ENCODE measurements at regions of chr7 and their contacts with region 1.

Region 1: GRCh38 chr7:22559829-22560489 is 60.0 kb upstream of the STEAP1B start:
- DNase-seq: peak in 4 of 5 donors; percentile 72 to 92 (median 80)
- H3K4me3 ChIP-seq: no peak overlapping the region
- H3K27ac ChIP-seq: no peak overlapping the region
- H3K4me1 ChIP-seq: peaks cover 8 to 25% (median 16%) of the 10 kb centered on the region in 3 donors
- H3K27me3 ChIP-seq: no peaks in the 10 kb centered on the region
- CTCF ChIP-seq: peak; percentile 96

Region 2: DNA sequence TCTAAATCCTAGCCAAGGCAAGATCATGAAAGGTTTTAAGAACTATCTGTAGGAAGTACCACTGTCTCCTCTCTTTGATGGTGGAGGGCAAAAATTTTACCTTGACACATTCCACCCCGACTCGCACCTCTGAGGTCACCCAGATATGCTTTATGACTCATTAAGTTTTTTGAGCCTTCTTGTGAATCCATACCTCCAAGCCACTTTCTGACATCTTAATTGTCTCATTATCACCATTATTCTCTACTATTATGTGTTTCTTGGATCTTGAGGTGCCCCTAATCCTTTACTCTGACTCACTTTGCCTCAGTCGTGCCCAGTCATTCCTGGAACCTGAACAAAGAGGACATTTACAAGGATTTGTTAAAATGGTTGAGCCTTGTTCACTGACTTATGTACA is 349.6 kb before region 1 on chr7:
- intact Hi-C with region 1: no loop called
- DNase-seq: no peak
- H3K4me3 ChIP-seq: no peak overlapping the region
- H3K27ac ChIP-seq: no peak overlapping the region
- H3K4me1 ChIP-seq: peaks cover 0 to 2% (median 0%) of the 10 kb centered on the region in 3 donors
- H3K27me3 ChIP-seq: no peaks in the 10 kb centered on the region
- CTCF ChIP-seq: no peak

Region 3: GRCh38 chr7:22387583-22387982 is 172.4 kb before region 1 on chr7:
- intact Hi-C with region 1: no loop called
- DNase-seq: peak in 2 of 5 donors; percentile 13 to 40
- H3K4me3 ChIP-seq: no peak overlapping the region
- H3K27ac ChIP-seq: no peak overlapping the region
- H3K4me1 ChIP-seq: no peaks in the 10 kb centered on the region
- H3K27me3 ChIP-seq: no peaks in the 10 kb centered on the region
- CTCF ChIP-seq: no peak

Region 4: DNA sequence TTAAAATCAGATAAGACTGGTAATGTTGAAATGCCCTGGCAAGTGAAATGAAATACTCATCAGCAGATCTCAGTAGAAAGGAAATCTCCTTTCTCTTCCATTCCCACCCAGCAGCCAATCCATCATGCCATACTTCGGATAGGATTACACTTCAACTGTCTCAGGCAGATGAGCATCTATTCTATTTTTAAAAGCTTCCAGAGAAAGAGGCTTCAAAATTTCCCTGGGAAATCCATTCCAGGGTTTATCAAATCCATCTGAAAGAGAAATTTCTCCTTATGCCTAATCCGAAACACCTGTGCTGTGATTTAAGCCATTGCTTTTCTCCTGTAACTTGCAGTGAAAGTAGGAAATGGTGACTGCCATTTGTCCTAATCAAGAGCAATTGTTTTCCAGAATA is 142.6 kb before region 1 on chr7:
- intact Hi-C with region 1: no loop called
- DNase-seq: peak in 1 of 5 donors; percentile 14
- H3K4me3 ChIP-seq: no peak overlapping the region
- H3K27ac ChIP-seq: no peak overlapping the region
- H3K4me1 ChIP-seq: no peaks in the 10 kb centered on the region
- H3K27me3 ChIP-seq: no peaks in the 10 kb centered on the region
- CTCF ChIP-seq: no peak

Region 5: DNA sequence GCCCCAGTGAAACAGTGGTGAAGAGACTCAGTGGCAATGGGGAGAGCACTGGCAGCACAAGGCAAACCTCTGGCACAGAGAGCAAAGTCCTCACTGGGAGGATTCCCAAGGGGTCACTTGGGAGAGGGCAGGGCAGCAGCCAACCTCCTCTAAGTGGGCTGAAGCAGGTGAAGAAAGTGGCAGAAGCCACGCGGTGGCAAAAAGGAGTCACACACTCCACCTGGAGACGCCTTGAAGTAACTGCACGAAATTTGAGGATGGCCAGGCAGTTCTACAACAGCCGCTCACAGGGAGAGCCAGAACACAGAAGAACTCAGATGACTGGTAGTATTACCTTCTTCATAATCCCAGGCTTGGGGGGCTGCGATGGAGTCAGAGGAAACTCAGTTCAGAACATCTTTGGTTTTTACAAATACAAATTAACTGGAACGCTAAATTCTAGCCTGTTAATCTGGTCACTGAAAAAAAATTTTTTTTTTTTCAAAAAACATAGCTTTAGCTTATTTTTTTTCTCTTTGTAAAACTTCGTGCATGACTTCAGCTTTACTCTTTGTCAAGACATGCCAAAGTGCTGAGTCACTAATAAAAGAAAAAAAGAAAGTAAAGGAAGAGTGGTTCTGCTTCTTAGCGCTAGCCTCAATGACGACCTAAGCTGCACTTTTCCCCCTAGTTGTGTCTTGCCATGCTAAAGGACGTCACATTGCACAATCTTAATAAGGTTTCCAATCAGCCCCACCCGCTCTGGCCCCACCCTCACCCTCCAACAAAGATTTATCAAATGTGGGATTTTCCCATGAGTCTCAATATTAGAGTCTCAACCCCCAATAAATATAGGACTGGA is 166.6 kb after region 1 on chr7:
- intact Hi-C with region 1: loop called (anchors 10 kb)
- DNase-seq: peak; percentile 46 to 78 (median 61)
- H3K4me3 ChIP-seq: peak overlapping the region in 2 of 3 donors; percentile 36 to 50
- H3K27ac ChIP-seq: no peak overlapping the region
- H3K4me1 ChIP-seq: peaks cover 0 to 14% (median 7%) of the 10 kb centered on the region in 3 donors
- H3K27me3 ChIP-seq: no peaks in the 10 kb centered on the region
- CTCF ChIP-seq: peak; percentile 67

Region 6: GRCh38 chr7:23055582-23056178 is 495.7 kb after region 1 on chr7:
- intact Hi-C with region 1: loop called (anchors 10 kb)
- DNase-seq: peak in 3 of 5 donors; percentile 34 to 66 (median 57)
- H3K4me3 ChIP-seq: no peak overlapping the region
- H3K27ac ChIP-seq: no peak overlapping the region
- H3K4me1 ChIP-seq: no peaks in the 10 kb centered on the region
- H3K27me3 ChIP-seq: no peaks in the 10 kb centered on the region
- CTCF ChIP-seq: peak; percentile 81

Measured in kidney (tissue), 22 donors.